Stomach (tissue), 19 donors: ENCODE measurements at regions of chr5 and their contacts with region 1.

Region 1: GRCh38 chr5:78537821-78538220 is 110.8 kb downstream of the LHFPL2 start:
- DNase-seq: peak in 1 of 2 donors; percentile 80
- H3K4me3 ChIP-seq: no peak overlapping the region
- H3K27ac ChIP-seq: no peak overlapping the region
- H3K4me1 ChIP-seq: peaks cover 0 to 44% (median 13%) of the 10 kb centered on the region in 4 donors
- H3K27me3 ChIP-seq: no peaks in the 10 kb centered on the region
- CTCF ChIP-seq: peak in 5 of 7 experiments; percentile 21 to 37 (median 26)
- EP300 ChIP-seq: no peak
- POLR2A ChIP-seq: no peak

Region 2: GRCh38 chr5:78377056-78377717 is 160.6 kb before region 1 on chr5:
- intact Hi-C with region 1: no loop called
- DNase-seq: no peak
- H3K4me3 ChIP-seq: no peak overlapping the region
- H3K27ac ChIP-seq: peak overlapping the region in 2 of 5 donors; percentile 14 to 39
- H3K4me1 ChIP-seq: peaks cover 0 to 37% (median 15%) of the 10 kb centered on the region in 4 donors
- H3K27me3 ChIP-seq: no peaks in the 10 kb centered on the region
- CTCF ChIP-seq: no peak
- EP300 ChIP-seq: no peak
- POLR2A ChIP-seq: no peak

Region 3: GRCh38 chr5:78467752-78468357 is 70.0 kb before region 1 on chr5:
- intact Hi-C with region 1: no loop called
- DNase-seq: peak in 1 of 2 donors; percentile 52
- H3K4me3 ChIP-seq: no peak overlapping the region
- H3K27ac ChIP-seq: no peak overlapping the region
- H3K4me1 ChIP-seq: peaks cover 0 to 11% (median 0%) of the 10 kb centered on the region in 4 donors
- H3K27me3 ChIP-seq: no peaks in the 10 kb centered on the region
- CTCF ChIP-seq: peak in 5 of 7 experiments; percentile 55 to 84 (median 58)
- EP300 ChIP-seq: no peak
- POLR2A ChIP-seq: no peak

Region 4: GRCh38 chr5:78627175-78627574 is 89.4 kb after region 1 on chr5:
- intact Hi-C with region 1: no loop called
- DNase-seq: peak in 1 of 2 donors; percentile 43
- H3K4me3 ChIP-seq: no peak overlapping the region
- H3K27ac ChIP-seq: peak overlapping the region in 3 of 5 donors; percentile 29 to 57 (median 29)
- H3K4me1 ChIP-seq: peaks cover 0 to 64% (median 36%) of the 10 kb centered on the region in 4 donors
- H3K27me3 ChIP-seq: no peaks in the 10 kb centered on the region
- CTCF ChIP-seq: no peak
- EP300 ChIP-seq: no peak
- POLR2A ChIP-seq: no peak

Region 5: DNA sequence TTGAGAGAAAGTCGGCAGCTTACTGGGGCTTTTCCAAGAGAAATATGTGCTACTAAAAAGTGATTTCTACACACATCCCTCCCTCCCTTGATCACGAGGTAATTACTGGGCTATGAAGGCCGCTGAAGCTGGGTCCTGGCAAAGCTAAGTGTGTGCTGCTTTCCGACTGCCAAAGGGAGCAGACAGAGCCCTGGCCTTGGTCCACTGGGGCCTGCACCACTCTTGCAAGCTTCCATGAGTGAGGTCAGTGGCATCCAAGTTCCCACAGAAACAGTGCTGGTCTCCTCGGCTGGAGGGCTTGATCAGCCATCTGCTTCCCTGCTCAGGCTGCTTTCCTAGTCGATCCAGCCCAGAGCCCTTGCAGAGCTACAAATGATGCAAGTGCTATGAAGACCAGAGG is 265.5 kb after region 1 on chr5:
- intact Hi-C with region 1: loop called (anchors 10 kb)
- DNase-seq: peak in 1 of 2 donors; percentile 63
- H3K4me3 ChIP-seq: no peak overlapping the region
- H3K27ac ChIP-seq: peak overlapping the region in 1 of 5 donors; percentile 66
- H3K4me1 ChIP-seq: peaks cover 0 to 7% (median 3%) of the 10 kb centered on the region in 4 donors
- H3K27me3 ChIP-seq: no peaks in the 10 kb centered on the region
- CTCF ChIP-seq: no peak
- EP300 ChIP-seq: no peak
- POLR2A ChIP-seq: no peak